ENCODE measurements at regions of chr19 and their contacts with region 1.

Region 1: GRCh38 chr19:3324321-3324856 is 42.0 kb upstream of the NFIC start:
- DNase-seq: peak; percentile 54
- ATAC-seq: peak; percentile 82
- H3K4me3 ChIP-seq: no peak overlapping the region
- H3K27ac ChIP-seq: no peak overlapping the region
- H3K4me1 ChIP-seq: peaks cover 5 to 12% of the 10 kb centered on the region in 2 experiments; a peak in 3 of 4 replicates
- H3K27me3 ChIP-seq: peaks cover 13% of the 10 kb centered on the region; the same call in 1 of the 2 replicates
- CTCF ChIP-seq: peak; percentile 54 to 97 (median 96); a peak in 5 of 6 replicates
- POLR2A ChIP-seq: no peak
- RAD21 ChIP-seq: no peak; the same call in none of the 2 replicates

Region 2: DNA sequence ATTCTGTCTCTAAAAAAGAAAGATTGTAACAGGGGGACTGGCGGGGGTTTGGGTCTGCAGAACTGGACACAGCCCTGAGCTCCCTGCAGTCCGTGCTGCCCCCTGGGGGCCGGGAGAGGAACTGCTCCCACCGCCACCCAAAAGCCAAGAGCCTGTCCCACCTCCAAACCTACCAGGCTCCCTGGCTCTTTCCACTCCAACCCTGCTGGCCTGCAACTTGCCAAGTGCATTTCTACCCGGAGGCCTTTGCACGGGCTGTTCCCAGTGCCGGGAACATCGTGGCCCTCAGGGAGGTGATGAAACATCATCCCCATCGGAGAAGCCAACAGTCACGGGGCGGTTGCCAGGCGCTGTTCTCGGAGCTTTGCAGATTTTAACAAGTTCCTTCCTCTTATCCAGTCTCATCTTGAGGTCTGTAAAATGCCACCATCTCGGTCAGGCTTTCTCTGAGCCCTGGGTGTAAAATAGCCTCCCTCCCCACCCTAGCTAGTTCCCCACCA is 105.2 kb after region 1 on chr19:
- CTCF ChIA-PET with region 1: interaction called, 13 read pairs
- POLR2A ChIA-PET with region 1: interaction called, 3 read pairs
- RAD21 ChIA-PET with region 1: no interaction called
- intact Hi-C with region 1: loop called (anchors 1 kb)
- DNase-seq: peak; percentile 31
- ATAC-seq: peak; percentile 82
- H3K4me3 ChIP-seq: no peak overlapping the region
- H3K27ac ChIP-seq: no peak overlapping the region
- H3K4me1 ChIP-seq: peaks cover 0 to 6% of the 10 kb centered on the region in 2 experiments; a peak in 2 of 4 replicates
- H3K27me3 ChIP-seq: no peaks in the 10 kb centered on the region
- CTCF ChIP-seq: peak; percentile 59 to 99 (median 93)
- POLR2A ChIP-seq: no peak
- RAD21 ChIP-seq: peak; percentile 79

Region 3: DNA sequence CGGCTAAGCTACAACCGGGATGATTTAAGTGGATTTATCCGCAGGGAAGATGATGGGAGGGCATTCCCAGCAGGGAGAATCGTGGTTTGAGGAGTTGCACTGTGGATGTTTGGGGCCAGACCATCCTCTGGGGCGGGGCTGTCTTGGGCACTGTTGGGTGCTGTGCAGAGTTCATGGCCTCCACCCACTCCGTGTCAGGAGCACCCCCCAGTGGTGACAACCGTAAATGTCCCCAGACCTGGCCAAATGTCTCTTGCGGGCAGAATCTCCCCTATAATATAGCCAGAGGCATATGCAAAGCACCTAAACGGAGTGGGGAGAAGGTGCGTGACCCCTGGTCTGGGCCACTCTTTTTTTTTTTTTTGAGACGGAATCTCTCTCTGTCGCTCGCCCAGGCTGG is 115.7 kb after region 1 on chr19:
- CTCF ChIA-PET with region 1: interaction called, 3 read pairs
- POLR2A ChIA-PET with region 1: no interaction called
- RAD21 ChIA-PET with region 1: interaction called in 1 of 2 experiments, 3 read pairs
- intact Hi-C with region 1: loop called (anchors 1 kb)
- DNase-seq: no peak
- ATAC-seq: peak; percentile 70
- H3K4me3 ChIP-seq: no peak overlapping the region
- H3K27ac ChIP-seq: no peak overlapping the region
- H3K4me1 ChIP-seq: peaks cover 3 to 9% of the 10 kb centered on the region in 2 experiments; a peak in 3 of 4 replicates
- H3K27me3 ChIP-seq: no peaks in the 10 kb centered on the region
- CTCF ChIP-seq: peak; percentile 50 to 69 (median 69)
- POLR2A ChIP-seq: no peak
- RAD21 ChIP-seq: peak; percentile 75

Region 4: GRCh38 chr19:3471954-3472655 is 147.7 kb after region 1 on chr19:
- CTCF ChIA-PET with region 1: interaction called, 18 read pairs
- POLR2A ChIA-PET with region 1: no interaction called
- RAD21 ChIA-PET with region 1: no interaction called
- intact Hi-C with region 1: loop called (anchors 2 kb)
- DNase-seq: no peak
- ATAC-seq: peak; percentile 57
- H3K4me3 ChIP-seq: no peak overlapping the region
- H3K27ac ChIP-seq: no peak overlapping the region
- H3K4me1 ChIP-seq: no peaks in the 10 kb centered on the region
- H3K27me3 ChIP-seq: peaks cover 9% of the 10 kb centered on the region; the same call in 1 of the 2 replicates
- CTCF ChIP-seq: peak; percentile 71 to 95 (median 85); a peak in 5 of 6 replicates
- POLR2A ChIP-seq: no peak
- RAD21 ChIP-seq: peak; percentile 77

Region 5: DNA sequence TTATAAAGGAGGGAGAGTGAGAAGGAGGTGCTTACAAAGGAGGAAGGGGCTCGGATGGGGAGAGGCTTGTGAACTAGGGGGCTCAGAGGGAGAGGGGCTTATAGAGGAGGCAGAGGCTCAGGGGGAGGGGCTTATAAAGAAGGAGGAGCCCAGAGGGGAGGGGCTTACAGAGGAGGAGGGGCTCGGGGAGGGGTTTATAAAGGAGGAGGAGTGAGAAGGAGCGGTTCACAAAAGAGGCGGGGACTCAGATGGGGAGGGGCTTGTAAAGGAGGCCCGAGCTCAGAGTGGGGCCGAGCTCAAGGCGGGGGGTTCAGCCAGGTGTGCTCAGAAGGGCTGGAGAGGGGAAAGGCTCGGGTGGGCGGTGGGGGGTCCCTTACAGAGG is 155.4 kb after region 1 on chr19:
- CTCF ChIA-PET with region 1: interaction called, 23 read pairs
- POLR2A ChIA-PET with region 1: interaction called, 5 read pairs
- RAD21 ChIA-PET with region 1: no interaction called
- intact Hi-C with region 1: loop called (anchors 1 kb)
- DNase-seq: no peak
- ATAC-seq: peak; percentile 71
- H3K4me3 ChIP-seq: no peak overlapping the region
- H3K27ac ChIP-seq: no peak overlapping the region
- H3K4me1 ChIP-seq: peaks cover 0 to 7% of the 10 kb centered on the region in 2 experiments; a peak in 2 of 4 replicates
- H3K27me3 ChIP-seq: peaks cover 4% of the 10 kb centered on the region; the same call in 1 of the 2 replicates
- CTCF ChIP-seq: no peak
- POLR2A ChIP-seq: no peak
- RAD21 ChIP-seq: no peak

Measured in HCT116 (cell line).